Gastrocnemius medialis (tissue), 4 donors: ENCODE measurements at regions of chr3 and their contacts with region 1.

Region 1: DNA sequence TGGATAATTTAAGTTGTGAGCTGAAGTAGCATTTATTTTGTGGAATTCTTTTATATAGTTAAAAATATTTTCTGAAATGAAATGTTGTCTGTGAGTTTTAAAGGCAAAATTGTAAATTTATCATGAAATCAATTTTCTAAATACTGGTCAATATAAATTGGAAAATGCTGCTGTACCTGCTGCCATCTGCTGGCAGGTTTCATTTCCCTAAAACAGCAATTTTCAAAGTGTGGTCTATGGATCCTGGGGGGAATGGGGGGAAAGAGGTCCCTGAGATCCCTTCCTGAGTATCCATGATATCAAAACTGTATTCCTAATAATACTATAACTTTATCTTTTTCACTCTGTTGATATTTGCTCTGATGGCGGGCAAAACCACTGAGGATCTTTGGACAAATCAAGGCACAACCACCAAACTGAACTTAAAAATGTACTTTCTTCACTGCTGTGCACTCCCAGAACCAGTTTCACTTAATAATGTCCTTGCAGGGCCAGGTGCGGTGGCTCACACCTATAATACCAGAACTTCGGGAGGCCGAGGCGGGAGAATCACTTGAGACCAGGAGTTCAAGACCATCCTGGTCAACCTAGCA is 17.2 kb upstream of the CCR4 start:
- DNase-seq: no peak
- ATAC-seq: no peak
- H3K4me3 ChIP-seq: no peak overlapping the region
- H3K27ac ChIP-seq: no peak overlapping the region
- H3K4me1 ChIP-seq: no peaks in the 10 kb centered on the region
- H3K27me3 ChIP-seq: no peaks in the 10 kb centered on the region
- CTCF ChIP-seq: peak in 2 of 5 experiments; percentile 40 to 41
- POLR2A ChIP-seq: no peak

Region 2: GRCh38 chr3:32733631-32734229 is 200.5 kb before region 1 on chr3:
- in situ Hi-C with region 1: loop called in 1 of 4 experiments (anchors 10 kb)
- intact Hi-C with region 1: no loop called
- DNase-seq: no peak
- ATAC-seq: no peak
- H3K4me3 ChIP-seq: no peak overlapping the region
- H3K27ac ChIP-seq: no peak overlapping the region
- H3K4me1 ChIP-seq: no peaks in the 10 kb centered on the region
- H3K27me3 ChIP-seq: no peaks in the 10 kb centered on the region
- CTCF ChIP-seq: peak in 2 of 5 experiments; percentile 4 to 32
- POLR2A ChIP-seq: no peak